OCI-LY7 (cell line): ENCODE measurements at regions of chr6 and their contacts with region 1.

Region 1: DNA sequence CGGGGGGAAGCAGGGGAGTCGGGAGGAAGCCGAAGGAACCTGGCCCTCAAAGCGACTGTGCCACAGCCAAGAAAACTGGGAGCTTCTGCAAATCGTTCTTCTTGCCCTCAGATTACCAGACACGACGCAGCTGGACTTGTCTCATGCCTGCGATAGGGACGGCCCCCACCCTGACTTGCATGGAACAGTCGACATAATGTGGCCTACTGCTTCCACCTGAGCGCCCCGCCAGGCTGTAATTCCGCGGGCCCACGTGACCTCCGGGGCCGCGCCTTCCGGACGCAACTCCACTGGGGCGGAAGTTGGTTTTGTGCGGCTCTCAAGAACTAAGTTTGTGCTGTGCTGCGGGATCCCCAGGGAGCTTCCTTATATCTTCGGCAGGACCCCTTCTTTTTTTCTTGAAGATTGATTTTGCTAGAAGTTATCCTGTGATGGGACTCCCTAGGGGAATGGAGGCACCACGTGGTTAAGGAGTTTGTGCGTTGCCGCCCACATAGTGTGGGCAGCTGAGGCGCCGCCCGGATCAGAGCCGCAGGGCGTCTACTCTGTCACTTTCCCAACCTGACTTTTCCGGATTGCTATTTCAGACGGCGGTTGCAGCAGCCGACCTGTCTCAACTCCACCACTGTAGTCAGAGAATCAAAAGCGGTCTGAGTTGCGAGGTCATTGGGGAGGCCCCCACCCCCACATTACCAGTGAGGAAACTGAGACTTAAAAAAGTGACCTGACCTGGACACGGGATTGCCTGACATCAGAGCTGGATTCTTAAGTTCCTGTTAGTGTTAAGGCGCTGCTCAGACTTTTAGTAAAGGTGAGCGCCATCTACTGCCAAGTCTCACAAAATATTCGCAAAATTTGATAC is 540 bp upstream of the CD164 start:
- DNase-seq: peak; percentile 97
- H3K4me3 ChIP-seq: peak overlapping the region; percentile 91
- H3K27ac ChIP-seq: peak overlapping the region; percentile 85
- H3K4me1 ChIP-seq: peaks cover 28% of the 10 kb centered on the region
- CTCF ChIP-seq: peak; percentile 90

Region 2: DNA sequence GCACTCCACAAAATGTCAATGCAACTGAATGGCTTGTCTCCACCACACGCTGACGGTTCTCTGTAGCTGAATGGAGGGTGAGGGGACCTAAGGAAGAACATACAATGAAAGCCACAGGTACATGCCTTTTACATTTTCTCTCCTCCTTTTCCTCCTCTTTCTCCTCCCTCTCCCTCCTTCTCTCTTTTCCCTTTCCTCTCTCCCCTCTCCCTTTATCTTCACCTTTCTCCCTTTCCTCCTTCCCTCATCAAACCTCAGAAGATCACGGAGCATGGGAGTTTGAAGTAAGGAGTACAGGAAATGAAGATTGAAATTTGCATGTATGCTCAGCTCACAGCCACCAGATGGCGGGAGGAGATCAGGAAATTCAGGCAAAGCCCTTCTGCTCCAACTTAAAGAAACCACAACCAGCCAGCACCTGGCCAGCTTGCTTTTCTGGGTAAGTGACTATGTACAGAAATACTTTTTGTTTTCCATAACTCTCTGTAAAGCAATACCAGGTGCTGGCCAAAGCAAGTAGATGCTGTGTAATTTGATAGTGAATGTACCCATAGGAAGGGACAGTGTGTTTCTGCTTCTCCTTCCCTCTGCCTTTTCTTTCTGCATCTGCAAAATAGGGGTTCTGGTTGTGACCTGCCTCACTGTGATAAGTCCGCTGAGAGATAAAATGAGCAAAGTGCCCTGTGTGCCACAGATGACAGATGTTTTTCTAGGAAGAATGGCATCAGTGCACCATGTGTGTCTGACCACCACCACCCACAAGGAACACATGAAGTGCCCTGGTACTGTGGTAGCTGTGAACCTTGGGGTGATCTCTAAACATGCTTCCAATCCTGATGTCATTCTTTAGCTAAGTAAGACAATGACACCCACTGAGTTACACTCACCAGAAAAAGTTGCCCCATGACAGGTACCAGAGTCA is 840.7 kb before region 1 on chr6:
- CTCF ChIA-PET with region 1: no interaction called
- POLR2A ChIA-PET with region 1: no interaction called
- intact Hi-C with region 1: loop called (anchors 5 kb)
- DNase-seq: peak; percentile 93
- H3K4me3 ChIP-seq: peak overlapping the region; percentile 33
- H3K27ac ChIP-seq: peak overlapping the region; percentile 57
- H3K4me1 ChIP-seq: peaks cover 24% of the 10 kb centered on the region
- CTCF ChIP-seq: peak; percentile 98

Region 3: DNA sequence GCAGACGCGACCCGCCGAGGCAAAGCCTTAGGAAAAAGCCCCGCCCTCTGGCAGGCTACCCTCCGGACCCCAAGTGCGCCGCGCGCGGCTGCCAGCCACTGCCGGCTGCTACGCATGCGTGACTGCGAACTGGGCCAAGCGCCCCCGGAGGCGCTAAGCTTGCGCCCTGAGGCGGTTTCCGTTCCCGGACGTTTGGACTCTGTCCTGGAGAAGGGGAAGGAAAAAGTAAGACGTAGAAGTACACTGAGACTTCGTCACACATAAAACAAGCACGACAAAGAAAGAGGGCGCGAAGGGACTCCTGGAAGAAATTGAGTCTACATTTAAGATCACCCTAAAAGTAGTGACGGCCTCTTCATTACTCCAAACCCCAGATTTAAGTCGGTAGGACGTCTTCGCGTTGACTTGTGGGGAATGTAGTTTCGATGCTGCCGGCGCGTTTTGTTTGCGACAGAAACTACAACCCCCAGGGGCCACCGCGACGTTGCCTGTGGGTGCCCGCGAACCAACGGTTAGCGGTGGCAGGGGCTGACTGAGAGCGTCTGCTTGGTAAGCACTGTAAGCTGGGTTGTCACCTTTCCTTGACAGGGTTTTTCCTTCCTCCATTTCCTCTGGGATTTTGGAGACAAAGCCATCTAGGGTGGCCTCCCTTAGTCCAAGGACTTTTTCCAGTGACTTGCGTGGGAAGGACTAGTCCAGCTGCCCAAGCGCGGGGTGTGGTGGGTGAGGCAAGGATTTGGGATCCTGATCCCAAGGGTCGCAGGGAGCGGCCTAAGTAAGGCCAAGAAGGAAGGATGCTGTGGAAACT is 287.6 kb before region 1 on chr6 and contains the start of gene CEP57L1:
- CTCF ChIA-PET with region 1: no interaction called
- POLR2A ChIA-PET with region 1: no interaction called
- intact Hi-C with region 1: loop called (anchors 2 kb)
- DNase-seq: peak; percentile 98
- H3K4me3 ChIP-seq: peak within 1 kb of the TSS; percentile 92
- H3K27ac ChIP-seq: peak within 1 kb of the TSS; percentile 87
- H3K4me1 ChIP-seq: peaks cover 25% of the 10 kb centered on the region
- CTCF ChIP-seq: peak; percentile 46; the same call in 1 of the 2 replicates
- total RNA-seq, gene CEP57L1: 22.7 and 26.7 TPM in 2 replicates

Region 4: GRCh38 chr6:109440331-109441068 is 57.7 kb after region 1 on chr6 and contains the starts of genes PPIL6 and SMPD2:
- CTCF ChIA-PET with region 1: interaction called, 3 read pairs
- POLR2A ChIA-PET with region 1: interaction called, 3 read pairs
- intact Hi-C with region 1: loop called (anchors 1 kb)
- DNase-seq: peak; percentile 89
- H3K4me3 ChIP-seq: peak within 1 kb of the TSS; percentile 83
- H3K27ac ChIP-seq: peak within 1 kb of the TSS; percentile 57
- H3K4me1 ChIP-seq: peaks cover 18% of the 10 kb centered on the region
- CTCF ChIP-seq: peak; percentile 57
- total RNA-seq, gene PPIL6: 0.15 and 1.6 TPM in 2 replicates
- total RNA-seq, gene SMPD2: 18.4 and 24.4 TPM in 2 replicates

Region 5: DNA sequence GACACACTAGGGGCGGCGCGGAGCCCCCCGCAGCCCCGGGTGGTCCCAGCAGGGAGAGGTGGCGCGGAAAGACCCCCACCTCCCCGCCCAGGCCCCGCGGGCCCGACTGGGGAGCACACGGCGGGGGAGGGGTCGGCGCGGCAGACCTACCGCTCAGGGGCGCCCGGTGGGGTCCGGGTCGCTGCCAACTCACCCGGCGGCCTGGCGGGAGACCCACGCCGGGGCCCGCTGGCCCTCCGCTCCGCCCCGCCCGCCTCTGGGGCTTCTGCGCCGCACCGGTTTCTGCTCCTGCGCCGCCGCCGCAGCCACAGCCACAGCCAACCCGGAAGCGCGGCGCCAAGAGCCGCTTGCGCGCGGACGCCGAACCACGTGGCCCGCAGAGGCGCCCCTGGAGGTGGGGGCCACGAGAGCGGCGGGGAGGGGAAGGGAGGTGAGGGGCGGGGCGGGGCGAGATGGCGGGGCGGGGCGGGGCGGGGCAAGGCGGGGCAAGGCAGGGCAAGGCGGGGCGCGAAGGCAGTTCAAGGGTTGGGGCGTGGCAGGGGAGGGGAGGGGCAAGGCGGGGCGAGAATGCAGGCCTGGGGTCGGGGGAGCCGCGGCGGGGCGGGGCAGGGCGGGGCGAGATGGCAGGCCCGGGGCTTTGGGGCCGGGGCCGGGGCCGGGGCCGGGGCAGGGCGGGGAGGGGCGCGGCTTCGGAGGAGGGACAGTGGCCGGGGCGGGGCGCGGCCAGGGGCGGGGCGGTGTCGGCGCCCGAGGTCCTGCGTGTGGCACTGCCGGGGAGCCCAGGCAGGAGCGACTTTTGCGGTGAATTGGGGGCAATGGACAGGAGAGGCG is 100.3 kb after region 1 on chr6 and contains the start of gene ZBTB24:
- CTCF ChIA-PET with region 1: no interaction called
- POLR2A ChIA-PET with region 1: no interaction called
- intact Hi-C with region 1: loop called (anchors 1 kb)
- DNase-seq: peak; percentile 95
- H3K4me3 ChIP-seq: peak within 1 kb of the TSS; percentile 96
- H3K27ac ChIP-seq: peak within 1 kb of the TSS; percentile 51
- H3K4me1 ChIP-seq: peaks cover 49% of the 10 kb centered on the region
- CTCF ChIP-seq: no peak
- total RNA-seq, gene ZBTB24: 13.7 and 15.3 TPM in 2 replicates

Region 6: GRCh38 chr6:109978174-109979032 is 595.6 kb after region 1 on chr6 and contains the start of gene GPR6:
- CTCF ChIA-PET with region 1: no interaction called
- POLR2A ChIA-PET with region 1: no interaction called
- intact Hi-C with region 1: no loop called
- DNase-seq: peak; percentile 27
- H3K4me3 ChIP-seq: no peak within 1 kb of the TSS
- H3K27ac ChIP-seq: no peak within 1 kb of the TSS
- H3K4me1 ChIP-seq: no peaks in the 10 kb centered on the region
- CTCF ChIP-seq: no peak
- total RNA-seq, gene GPR6: not detected in 2 replicates